Ascending aorta (tissue), 2 donors: ENCODE measurements at regions of chr12 and their contacts with region 1.

Region 1: GRCh38 chr12:117526757-117527478 is 165.5 kb upstream of the NOS1 start:
- DNase-seq: no peak
- H3K4me3 ChIP-seq: no peak overlapping the region
- H3K27ac ChIP-seq: no peak overlapping the region
- H3K4me1 ChIP-seq: no peaks in the 10 kb centered on the region
- H3K27me3 ChIP-seq: no peaks in the 10 kb centered on the region
- CTCF ChIP-seq: no peak

Region 2: DNA sequence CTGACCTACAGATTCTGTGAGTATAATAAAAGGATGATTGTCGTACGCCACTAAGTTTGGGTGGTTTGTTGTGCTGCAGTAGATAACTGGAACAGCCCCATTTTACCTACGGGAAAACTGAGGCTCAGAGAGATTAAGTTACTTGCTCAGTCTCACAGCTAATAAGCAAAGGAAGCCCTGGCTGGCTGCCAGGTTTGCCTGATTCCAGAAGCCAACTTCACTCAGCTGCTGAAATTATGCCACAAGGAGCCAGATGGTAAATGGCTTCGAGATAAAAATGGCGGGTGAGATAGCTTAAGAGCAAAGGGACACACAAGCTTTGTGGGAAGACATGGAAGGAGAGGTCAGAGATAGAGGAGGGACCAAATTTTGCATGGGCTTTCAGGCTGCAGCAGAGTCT is 26.1 kb after region 1 on chr12:
- intact Hi-C with region 1: loop called (anchors 1 kb)
- DNase-seq: no peak
- H3K4me3 ChIP-seq: no peak overlapping the region
- H3K27ac ChIP-seq: no peak overlapping the region
- H3K4me1 ChIP-seq: no peaks in the 10 kb centered on the region
- H3K27me3 ChIP-seq: no peaks in the 10 kb centered on the region
- CTCF ChIP-seq: no peak

Region 3: GRCh38 chr12:118061011-118061875 is 534.3 kb after region 1 on chr12 and contains the start of gene WSB2:
- intact Hi-C with region 1: no loop called
- DNase-seq: peak in 1 of 2 donors; percentile 88
- H3K4me3 ChIP-seq: peak within 1 kb of the TSS; percentile 75 to 86
- H3K27ac ChIP-seq: peak within 1 kb of the TSS; percentile 95 to 99
- H3K4me1 ChIP-seq: peaks cover 0 to 8% of the 10 kb centered on the region in 2 donors
- H3K27me3 ChIP-seq: no peaks in the 10 kb centered on the region
- CTCF ChIP-seq: no peak
- total RNA-seq, gene WSB2: 68.6 TPM